Panc1 (cell line): ENCODE measurements at regions of chr2 and their contacts with region 1.

Region 1: DNA sequence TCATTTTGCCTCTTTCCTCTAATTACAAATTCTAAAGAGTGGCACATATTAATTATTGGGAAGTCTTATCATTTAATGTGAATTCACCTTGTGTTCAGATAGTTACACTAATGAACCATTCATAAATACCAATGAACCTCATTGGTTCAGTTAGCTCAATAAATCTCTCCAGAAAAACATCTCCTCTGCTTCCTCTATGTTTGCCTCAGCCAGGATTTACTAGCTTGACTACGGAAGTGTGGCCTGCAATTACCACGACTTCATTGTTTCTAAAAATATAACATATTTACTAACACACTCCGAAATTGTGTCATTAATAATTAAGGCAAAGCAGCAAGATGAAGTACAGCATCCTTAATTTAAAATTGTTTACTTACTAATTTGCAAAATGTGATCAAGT is 103.3 kb downstream of the PLA2R1 start:
- DNase-seq: no peak
- ATAC-seq: no peak
- H3K4me3 ChIP-seq: no peak overlapping the region
- H3K27ac ChIP-seq: no peak overlapping the region
- H3K4me1 ChIP-seq: peaks cover 12% of the 10 kb centered on the region
- H3K27me3 ChIP-seq: no peaks in the 10 kb centered on the region
- CTCF ChIP-seq: no peak

Region 2: GRCh38 chr2:160039166-160039903 is 80.2 kb after region 1 on chr2:
- CTCF ChIA-PET with region 1: no interaction called
- POLR2A ChIA-PET with region 1: no interaction called
- in situ Hi-C with region 1: no loop called
- intact Hi-C with region 1: no loop called
- DNase-seq: no peak
- ATAC-seq: peak; percentile 90
- H3K4me3 ChIP-seq: no peak overlapping the region
- H3K27ac ChIP-seq: no peak overlapping the region
- H3K4me1 ChIP-seq: peaks cover 13% of the 10 kb centered on the region
- H3K27me3 ChIP-seq: no peaks in the 10 kb centered on the region
- CTCF ChIP-seq: no peak

Region 3: GRCh38 chr2:160892204-160892603 is 933.1 kb after region 1 on chr2:
- CTCF ChIA-PET with region 1: no interaction called
- POLR2A ChIA-PET with region 1: interaction called, 11 read pairs
- in situ Hi-C with region 1: no loop called
- intact Hi-C with region 1: no loop called
- DNase-seq: no peak
- ATAC-seq: no peak
- H3K4me3 ChIP-seq: no peak overlapping the region
- H3K27ac ChIP-seq: no peak overlapping the region
- H3K4me1 ChIP-seq: no peaks in the 10 kb centered on the region
- H3K27me3 ChIP-seq: no peaks in the 10 kb centered on the region
- CTCF ChIP-seq: no peak